ENCODE measurements at regions of chr9 and their contacts with region 1.

Region 1: GRCh38 chr9:113682297-113682771 is 193.8 kb upstream of the ZNF618 start:
- DNase-seq: peak; percentile 57 to 67
- ATAC-seq: peak; percentile 29 to 61 (median 56)
- H3K4me3 ChIP-seq: no peak overlapping the region
- H3K27ac ChIP-seq: no peak overlapping the region
- H3K4me1 ChIP-seq: peaks cover 0 to 6% (median 0%) of the 10 kb centered on the region in 9 donors
- H3K27me3 ChIP-seq: peaks cover 0 to 13% (median 2%) of the 10 kb centered on the region in 7 donors
- CTCF ChIP-seq: peak; percentile 76 to 97 (median 89)

Region 2: DNA sequence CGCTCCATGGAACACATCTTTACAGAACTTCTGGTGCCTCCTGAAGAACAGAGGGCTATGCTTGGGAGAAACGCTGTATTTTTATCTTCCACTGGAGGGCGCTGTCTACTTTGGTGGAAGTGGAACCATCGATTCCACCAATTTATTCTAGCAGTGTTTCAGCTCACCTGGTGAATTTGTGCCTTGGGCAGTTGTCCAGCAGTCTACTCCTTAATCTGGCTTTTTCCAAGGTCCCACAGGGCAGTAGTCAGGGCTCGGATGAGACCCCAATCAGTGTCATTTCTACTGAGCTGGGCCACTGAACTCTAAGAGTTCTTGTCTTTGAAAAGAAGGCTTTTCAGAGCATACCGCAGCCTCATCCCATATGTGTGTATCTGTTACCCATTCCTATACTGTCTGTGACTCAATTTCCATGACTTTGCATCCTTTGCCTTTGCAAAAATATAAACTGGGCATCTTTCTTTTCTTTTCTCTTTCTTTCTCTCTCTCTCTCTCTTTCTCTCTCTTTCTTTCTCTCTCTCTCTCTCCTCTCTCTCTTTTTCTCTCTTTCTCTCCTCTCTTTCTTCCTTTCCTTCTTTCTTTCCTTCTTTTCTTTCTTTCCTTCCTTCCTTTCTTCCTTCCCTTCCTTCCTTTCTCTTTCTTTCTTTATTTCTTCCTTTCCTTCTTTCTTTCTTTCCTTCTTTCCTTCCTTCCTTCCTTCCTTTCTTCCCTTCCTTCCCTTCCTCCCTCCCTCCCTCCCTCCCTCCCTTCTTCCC is 55.4 kb after region 1 on chr9:
- intact Hi-C with region 1: no loop called
- DNase-seq: peak in 1 of 2 donors; percentile 42
- ATAC-seq: peak in 1 of 8 donors; percentile 57
- H3K4me3 ChIP-seq: no peak overlapping the region
- H3K27ac ChIP-seq: no peak overlapping the region
- H3K4me1 ChIP-seq: no peaks in the 10 kb centered on the region
- H3K27me3 ChIP-seq: peaks cover 0 to 23% (median 15%) of the 10 kb centered on the region in 7 donors
- CTCF ChIP-seq: peak; percentile 26 to 83 (median 69)

Region 3: GRCh38 chr9:113886466-113886865 is 204.1 kb after region 1 on chr9:
- intact Hi-C with region 1: loop called in 1 of 10 experiments (anchors 10 kb)
- DNase-seq: no peak
- ATAC-seq: peak in 4 of 8 donors; percentile 38 to 64 (median 50)
- H3K4me3 ChIP-seq: peak overlapping the region in 9 of 10 donors; percentile 5 to 46 (median 39)
- H3K27ac ChIP-seq: peak overlapping the region in 5 of 10 donors; percentile 9 to 64 (median 42)
- H3K4me1 ChIP-seq: peaks cover 0 to 34% (median 19%) of the 10 kb centered on the region in 9 donors
- H3K27me3 ChIP-seq: no peaks in the 10 kb centered on the region
- CTCF ChIP-seq: no peak

Region 4: GRCh38 chr9:114033397-114034103 is 351.2 kb after region 1 on chr9:
- intact Hi-C with region 1: loop called in 4 of 10 experiments (anchors 5 to 10 kb)
- DNase-seq: peak in 1 of 2 donors; percentile 48
- ATAC-seq: peak; percentile 54 to 84 (median 73)
- H3K4me3 ChIP-seq: no peak overlapping the region
- H3K27ac ChIP-seq: no peak overlapping the region
- H3K4me1 ChIP-seq: peaks cover 0 to 7% (median 0%) of the 10 kb centered on the region in 9 donors
- H3K27me3 ChIP-seq: no peaks in the 10 kb centered on the region
- CTCF ChIP-seq: peak; percentile 23 to 74 (median 65)